HEK293T (cell line): ENCODE measurements at regions of chr16 and their contacts with region 1.

Region 1: GRCh38 chr16:74606521-74607310 is at the start of gene GLG1:
- DNase-seq: peak; percentile 89

Region 2: GRCh38 chr16:74617206-74617788 is 10.6 kb after region 1 on chr16:
- CTCF ChIA-PET with region 1: no interaction called
- POLR2A ChIA-PET with region 1: interaction called, 12 read pairs
- DNase-seq: no peak

Region 3: GRCh38 chr16:74650966-74651567 is 44.4 kb after region 1 on chr16:
- CTCF ChIA-PET with region 1: no interaction called
- POLR2A ChIA-PET with region 1: no interaction called
- DNase-seq: no peak

Region 4: GRCh38 chr16:74695450-74696422 is 89.0 kb after region 1 on chr16:
- CTCF ChIA-PET with region 1: no interaction called
- POLR2A ChIA-PET with region 1: no interaction called
- DNase-seq: peak; percentile 93